GM12878 (cell line): ENCODE measurements at regions of chr3 and their contacts with region 1.

Region 1: GRCh38 chr3:28334552-28334951 is 14.0 kb upstream of the ZCWPW2 start:
- DNase-seq: no peak
- ATAC-seq: peak; percentile 37; the same call in 2 of the 3 replicates
- H3K4me3 ChIP-seq: no peak overlapping the region
- H3K27ac ChIP-seq: no peak overlapping the region
- H3K4me1 ChIP-seq: no peaks in the 10 kb centered on the region
- H3K27me3 ChIP-seq: no peaks in the 10 kb centered on the region
- CTCF ChIP-seq: no peak; a peak in 1 of 6 replicates
- EP300 ChIP-seq: no peak
- POLR2A ChIP-seq: no peak
- RAD21 ChIP-seq: no peak

Region 2: DNA sequence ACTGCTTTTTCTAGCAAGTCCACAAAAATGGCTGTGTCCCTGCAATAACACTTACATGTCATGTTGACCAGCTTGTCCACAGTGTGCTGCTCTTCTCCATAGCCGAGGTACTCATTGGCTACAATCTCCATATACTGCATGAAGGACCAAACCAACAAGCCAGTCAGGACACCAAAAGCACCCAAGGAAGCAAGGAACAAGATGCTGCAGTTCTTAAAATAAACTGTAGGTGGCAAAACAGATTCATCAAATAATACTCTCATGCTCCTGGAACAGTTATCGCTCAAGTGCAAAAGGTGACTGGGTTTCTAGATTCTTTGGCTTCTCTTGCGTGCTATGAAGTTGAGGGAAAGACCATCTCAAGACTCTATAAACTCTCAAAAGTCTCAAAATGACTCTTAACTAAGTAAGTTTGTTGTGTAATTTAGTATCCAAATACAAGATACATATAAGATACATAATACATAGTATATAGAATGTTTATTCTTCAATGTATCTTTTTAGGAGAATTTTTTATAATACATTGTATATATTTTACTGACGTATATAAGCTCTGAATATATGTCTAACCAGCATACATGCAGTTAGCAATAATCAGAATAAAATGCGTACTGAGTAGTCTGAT is 1022.4 kb before region 1 on chr3:
- CTCF ChIA-PET with region 1: no interaction called
- POLR2A ChIA-PET with region 1: no interaction called
- RAD21 ChIA-PET with region 1: no interaction called
- SMC1A ChIA-PET with region 1: interaction called, 3 read pairs
- in situ Hi-C with region 1: loop called (anchors 10 kb)
- intact Hi-C with region 1: no loop called
- DNase-seq: peak; percentile 15
- ATAC-seq: peak; percentile 94
- H3K4me3 ChIP-seq: no peak overlapping the region
- H3K27ac ChIP-seq: no peak overlapping the region
- H3K4me1 ChIP-seq: no peaks in the 10 kb centered on the region
- H3K27me3 ChIP-seq: no peaks in the 10 kb centered on the region
- CTCF ChIP-seq: peak; percentile 64 to 77 (median 76); a peak in 5 of 6 replicates
- EP300 ChIP-seq: no peak
- POLR2A ChIP-seq: no peak
- RAD21 ChIP-seq: peak; percentile 83

Region 3: DNA sequence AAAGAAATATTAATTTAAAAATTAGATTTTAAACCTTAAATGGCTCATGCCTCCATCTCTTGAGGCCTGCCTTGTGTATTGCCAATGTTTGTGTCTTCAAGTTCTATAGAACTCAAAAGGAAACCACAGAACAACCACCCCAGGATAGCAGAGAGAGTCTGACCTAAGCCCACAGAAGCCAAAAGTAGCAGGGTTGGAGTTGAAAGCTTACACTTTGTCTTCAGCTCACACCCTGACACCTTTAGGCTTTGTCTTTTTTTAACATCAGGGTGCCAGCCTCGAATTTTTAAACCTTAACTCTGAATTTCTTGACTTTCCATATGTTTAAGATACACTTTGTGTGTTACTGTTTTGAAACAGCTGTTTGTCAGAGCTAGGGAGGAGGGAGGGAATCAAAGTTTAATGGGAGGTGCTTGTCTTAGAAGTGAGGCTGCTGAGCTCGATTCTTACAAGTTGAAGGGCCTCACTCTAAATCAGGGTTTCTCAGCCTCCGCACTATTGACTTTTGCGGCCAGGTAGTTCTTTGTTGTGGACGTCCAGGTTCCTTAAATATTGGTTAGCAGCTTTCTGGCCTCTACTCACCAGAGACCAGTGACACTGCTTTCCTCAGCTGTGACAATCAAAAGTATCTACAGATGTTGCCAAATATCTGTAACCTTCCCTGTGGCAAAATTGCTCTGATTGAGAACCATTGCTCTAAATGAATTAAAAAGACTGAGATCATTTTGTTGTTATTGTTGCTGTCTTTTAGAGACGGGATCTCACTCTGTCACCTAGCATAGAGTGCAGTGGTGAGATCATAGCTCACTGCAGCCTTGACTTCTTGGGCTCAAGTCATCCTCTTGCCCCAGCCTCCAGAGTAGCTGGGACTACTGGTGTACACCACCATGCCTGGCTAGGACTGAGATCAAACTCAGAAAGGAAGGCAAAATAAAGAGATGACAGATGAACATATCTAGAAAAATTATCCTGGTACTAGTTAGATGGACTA is 473.2 kb before region 1 on chr3:
- CTCF ChIA-PET with region 1: no interaction called
- POLR2A ChIA-PET with region 1: no interaction called
- RAD21 ChIA-PET with region 1: no interaction called
- SMC1A ChIA-PET with region 1: no interaction called
- in situ Hi-C with region 1: no loop called
- intact Hi-C with region 1: no loop called
- DNase-seq: no peak
- ATAC-seq: peak; percentile 44
- H3K4me3 ChIP-seq: no peak overlapping the region
- H3K27ac ChIP-seq: no peak overlapping the region
- H3K4me1 ChIP-seq: no peaks in the 10 kb centered on the region
- H3K27me3 ChIP-seq: no peaks in the 10 kb centered on the region
- CTCF ChIP-seq: no peak
- EP300 ChIP-seq: no peak
- POLR2A ChIP-seq: no peak
- RAD21 ChIP-seq: no peak

Region 4: DNA sequence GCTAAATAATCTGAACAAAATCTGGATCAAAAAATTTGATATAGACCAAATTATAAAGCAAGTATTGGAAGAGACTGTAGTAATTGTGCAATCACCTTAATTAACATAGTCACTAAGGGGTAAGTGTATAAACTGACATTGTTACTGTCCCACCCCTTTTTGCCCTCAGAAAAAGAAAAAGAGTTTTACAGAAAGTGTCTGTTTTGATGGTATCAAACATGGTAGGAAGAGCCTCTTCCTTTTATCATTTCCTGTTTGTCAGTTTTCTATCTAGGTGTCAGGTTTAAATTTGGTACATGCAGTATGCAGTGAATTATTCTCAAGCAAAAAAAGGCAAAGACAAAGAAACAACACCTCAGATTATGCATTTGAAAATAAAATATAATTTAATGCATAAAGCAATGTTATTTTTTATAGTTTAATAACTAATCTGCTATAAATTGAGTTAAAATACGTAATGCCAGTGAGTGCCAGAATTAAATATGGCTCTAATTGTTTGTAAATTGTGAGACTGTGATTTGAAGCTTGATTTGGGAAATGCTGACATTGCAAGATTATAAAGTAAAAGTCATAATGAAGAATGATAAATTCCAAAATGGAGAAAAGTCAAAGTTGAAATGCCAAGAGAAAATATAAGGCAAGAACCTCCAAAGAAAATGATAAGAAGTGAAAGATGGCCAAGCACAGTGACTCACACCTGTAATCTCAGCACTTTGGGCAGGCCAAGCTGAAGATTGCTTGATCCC is 123.4 kb before region 1 on chr3:
- CTCF ChIA-PET with region 1: no interaction called
- POLR2A ChIA-PET with region 1: no interaction called
- RAD21 ChIA-PET with region 1: no interaction called
- SMC1A ChIA-PET with region 1: no interaction called
- in situ Hi-C with region 1: no loop called
- intact Hi-C with region 1: no loop called
- DNase-seq: no peak
- ATAC-seq: no peak
- H3K4me3 ChIP-seq: no peak overlapping the region
- H3K27ac ChIP-seq: no peak overlapping the region
- H3K4me1 ChIP-seq: no peaks in the 10 kb centered on the region
- H3K27me3 ChIP-seq: no peaks in the 10 kb centered on the region
- CTCF ChIP-seq: no peak
- EP300 ChIP-seq: no peak
- POLR2A ChIP-seq: no peak
- RAD21 ChIP-seq: no peak

Region 5: GRCh38 chr3:28262001-28262400 is 72.6 kb before region 1 on chr3:
- CTCF ChIA-PET with region 1: no interaction called
- POLR2A ChIA-PET with region 1: no interaction called
- RAD21 ChIA-PET with region 1: no interaction called
- SMC1A ChIA-PET with region 1: no interaction called
- in situ Hi-C with region 1: no loop called
- intact Hi-C with region 1: no loop called
- DNase-seq: no peak
- ATAC-seq: no peak
- H3K4me3 ChIP-seq: no peak overlapping the region
- H3K27ac ChIP-seq: no peak overlapping the region
- H3K4me1 ChIP-seq: no peaks in the 10 kb centered on the region
- H3K27me3 ChIP-seq: no peaks in the 10 kb centered on the region
- CTCF ChIP-seq: no peak
- EP300 ChIP-seq: no peak
- POLR2A ChIP-seq: no peak
- RAD21 ChIP-seq: no peak

Region 6: GRCh38 chr3:28317438-28318022 is 17.0 kb before region 1 on chr3:
- CTCF ChIA-PET with region 1: interaction called, 56 read pairs
- POLR2A ChIA-PET with region 1: no interaction called
- RAD21 ChIA-PET with region 1: interaction called, 45 read pairs
- SMC1A ChIA-PET with region 1: interaction called, 21 read pairs
- in situ Hi-C with region 1: no loop called
- intact Hi-C with region 1: no loop called
- DNase-seq: no peak
- ATAC-seq: peak; percentile 96
- H3K4me3 ChIP-seq: no peak overlapping the region
- H3K27ac ChIP-seq: no peak overlapping the region
- H3K4me1 ChIP-seq: no peaks in the 10 kb centered on the region
- H3K27me3 ChIP-seq: no peaks in the 10 kb centered on the region
- CTCF ChIP-seq: peak; percentile 58 to 61 (median 59); a peak in 5 of 6 replicates
- EP300 ChIP-seq: no peak
- POLR2A ChIP-seq: no peak
- RAD21 ChIP-seq: peak; percentile 43; the same call in 1 of the 2 replicates

Region 7: DNA sequence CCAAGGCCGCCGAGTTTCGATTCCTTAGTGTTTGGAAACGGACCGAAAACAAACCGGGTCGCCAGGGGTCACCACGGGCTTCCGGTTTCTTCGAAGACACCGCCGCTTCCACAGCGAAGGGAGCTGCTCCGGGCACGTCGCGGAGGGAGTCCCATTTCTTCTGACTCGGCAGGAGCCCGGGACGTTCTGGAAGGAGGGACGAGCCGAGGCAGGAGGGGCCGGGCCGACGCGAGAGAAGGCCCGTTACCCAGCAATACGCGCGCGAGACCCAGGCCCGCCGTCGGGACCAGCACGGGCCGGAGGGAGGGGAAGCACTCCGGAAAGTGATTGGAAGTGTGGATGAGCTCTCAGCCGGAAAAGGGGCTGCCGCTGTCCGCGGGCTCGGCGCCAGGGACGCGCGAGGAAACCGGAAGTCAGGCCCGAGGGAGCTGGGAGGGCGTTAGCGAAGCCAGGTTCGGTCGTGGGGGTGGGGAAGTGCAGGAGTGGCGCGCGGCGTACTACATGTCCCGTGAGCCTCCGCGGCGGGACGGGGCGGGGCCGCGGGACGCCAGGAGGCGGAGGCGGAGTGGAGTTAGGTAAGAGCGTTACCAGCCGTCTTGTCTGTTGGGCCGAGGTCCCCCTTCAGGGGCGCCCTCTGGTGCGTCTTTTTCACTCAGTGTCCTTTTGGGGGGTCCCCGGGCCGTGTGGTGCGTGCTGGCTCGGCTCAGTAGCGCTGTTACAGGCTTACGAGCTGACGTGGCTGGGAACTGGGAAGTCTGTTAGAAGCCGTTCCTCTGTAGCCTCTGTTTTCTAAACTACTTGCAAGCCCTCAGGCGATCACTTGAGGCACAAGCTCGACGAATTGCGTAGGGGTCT is 14.3 kb after region 1 on chr3 and contains the starts of genes AZI2 and ZCWPW2:
- CTCF ChIA-PET with region 1: interaction called, 35 read pairs
- POLR2A ChIA-PET with region 1: interaction called, 3 read pairs
- RAD21 ChIA-PET with region 1: interaction called, 44 read pairs
- SMC1A ChIA-PET with region 1: interaction called, 37 read pairs
- in situ Hi-C with region 1: no loop called
- intact Hi-C with region 1: no loop called
- DNase-seq: peak; percentile 74
- ATAC-seq: peak; percentile 92
- H3K4me3 ChIP-seq: peak within 1 kb of the TSS; percentile 81
- H3K27ac ChIP-seq: peak within 1 kb of the TSS; percentile 97
- H3K4me1 ChIP-seq: no peaks in the 10 kb centered on the region
- H3K27me3 ChIP-seq: no peaks in the 10 kb centered on the region
- CTCF ChIP-seq: peak; percentile 20 to 43 (median 23); a peak in 4 of 6 replicates
- EP300 ChIP-seq: peak in 1 of 2 experiments; percentile 53; a peak in 1 of 4 replicates
- POLR2A ChIP-seq: peak; percentile 88
- RAD21 ChIP-seq: no peak
- polyA plus RNA-seq, gene AZI2: 33.4 to 36.2 TPM
- polyA plus RNA-seq, gene ZCWPW2: 0.31 to 0.37 TPM